CD14-positive monocyte (primary cell): ENCODE measurements at regions of chr2 and their contacts with region 1.

Region 1: GRCh38 chr2:69643602-69644505 is at the start of gene AAK1:
- DNase-seq: peak; percentile 74 to 83 (median 81)
- H3K4me3 ChIP-seq: peak within 1 kb of the TSS; percentile 92 to 96 (median 96)
- H3K4me3 Mint-ChIP-seq: peak within 1 kb of the TSS; percentile 94 to 95
- H3K27ac ChIP-seq: peak within 1 kb of the TSS; percentile 94 to 96
- H3K27ac Mint-ChIP-seq: peak within 1 kb of the TSS; percentile 93 to 99 (median 98)
- H3K4me1 ChIP-seq: peaks cover 51 to 55% of the 10 kb centered on the region in 2 donors
- H3K4me1 Mint-ChIP-seq: peaks cover 69% of the 10 kb centered on the region
- H3K27me3 ChIP-seq: no peaks in the 10 kb centered on the region
- H3K27me3 Mint-ChIP-seq: peaks cover 0 to 2% (median 0%) of the 10 kb centered on the region in 3 donors
- CTCF ChIP-seq: no peak
- polyA plus RNA-seq, gene AAK1: 9.8 to 18.9 (median 10.8) TPM

Region 2: DNA sequence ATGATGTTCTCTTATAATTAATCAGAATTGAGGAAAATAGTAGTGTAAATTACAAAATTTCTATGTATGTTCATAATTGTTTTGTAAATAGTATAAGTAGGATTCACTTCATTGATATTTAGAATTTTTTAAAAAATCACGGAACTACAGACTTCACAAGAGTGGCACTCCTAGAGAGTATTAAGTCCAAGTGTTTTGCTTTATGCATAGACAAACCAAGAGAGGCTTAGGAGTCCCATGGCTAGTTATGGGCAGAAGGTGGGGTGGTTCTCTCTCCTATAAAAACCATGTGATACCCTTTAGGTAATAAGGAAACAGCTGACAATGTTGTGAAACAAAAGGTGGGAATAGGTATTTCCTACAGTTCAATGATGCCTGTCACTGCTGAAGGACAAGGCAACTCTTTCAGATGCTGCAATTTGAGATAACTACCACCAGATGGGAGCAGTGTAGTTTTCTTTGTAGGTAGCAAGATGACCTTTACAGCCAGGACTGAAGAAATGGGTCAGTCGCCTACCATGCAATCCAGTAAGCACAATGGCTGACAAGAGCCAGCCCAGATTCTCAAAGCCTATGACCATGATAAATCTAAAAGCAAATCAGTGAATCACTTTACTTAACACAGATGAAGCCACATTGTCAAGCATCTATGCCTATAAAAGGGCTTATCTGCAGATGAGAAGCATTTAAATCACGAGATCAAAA is 84.3 kb before region 1 on chr2:
- intact Hi-C with region 1: loop called in 1 of 2 experiments (anchors 5 kb)
- DNase-seq: peak; percentile 43 to 67 (median 64)
- H3K4me3 ChIP-seq: no peak overlapping the region
- H3K4me3 Mint-ChIP-seq: no peak overlapping the region
- H3K27ac ChIP-seq: no peak overlapping the region
- H3K27ac Mint-ChIP-seq: no peak overlapping the region
- H3K4me1 ChIP-seq: peaks cover 12 to 16% of the 10 kb centered on the region in 2 donors
- H3K4me1 Mint-ChIP-seq: peaks cover 34% of the 10 kb centered on the region
- H3K27me3 ChIP-seq: no peaks in the 10 kb centered on the region
- H3K27me3 Mint-ChIP-seq: no peaks in the 10 kb centered on the region
- CTCF ChIP-seq: peak; percentile 83

Region 3: DNA sequence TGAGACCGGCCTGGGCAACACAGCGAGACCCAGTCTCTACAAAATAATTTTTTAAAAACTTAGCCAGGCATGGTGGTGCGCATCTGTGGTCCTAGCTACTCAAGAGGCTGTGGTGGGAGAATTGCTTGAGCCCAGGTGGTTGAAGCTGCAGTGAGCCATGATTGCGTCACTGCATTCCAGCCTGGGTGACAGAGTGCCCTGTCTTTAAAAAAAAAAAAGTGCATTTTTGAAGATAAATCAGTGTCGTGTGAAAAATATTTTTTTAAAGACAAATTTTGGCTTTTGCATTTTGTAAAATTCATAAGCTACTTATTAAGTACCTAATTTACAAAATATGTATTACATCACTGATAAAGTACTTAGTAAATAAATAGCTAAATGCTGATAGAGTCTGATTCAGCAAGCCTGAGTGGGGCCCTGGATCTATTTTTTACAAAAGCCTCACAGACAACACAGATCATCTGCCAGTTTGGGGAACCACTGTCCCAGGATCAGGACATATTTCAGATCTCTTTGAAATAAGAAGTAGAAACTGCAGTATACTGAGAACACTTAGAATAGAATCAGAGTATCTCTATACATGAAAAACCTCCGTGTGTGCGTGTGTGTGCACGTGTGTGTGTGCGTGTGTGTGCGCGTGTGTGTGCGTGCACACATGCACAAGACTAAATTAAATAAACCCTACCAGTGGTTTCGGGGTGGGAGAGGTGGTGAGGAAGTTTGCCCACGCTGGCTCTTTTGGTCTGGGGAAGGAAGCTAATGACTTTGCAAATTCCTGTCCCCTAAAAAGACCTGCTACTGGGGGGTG is 61.9 kb before region 1 on chr2:
- intact Hi-C with region 1: loop called in 1 of 2 experiments (anchors 2 kb)
- DNase-seq: peak; percentile 42 to 58 (median 56)
- H3K4me3 ChIP-seq: peak overlapping the region; percentile 8 to 68 (median 25)
- H3K4me3 Mint-ChIP-seq: peak overlapping the region; percentile 75 to 93
- H3K27ac ChIP-seq: peak overlapping the region; percentile 71 to 86
- H3K27ac Mint-ChIP-seq: peak overlapping the region; percentile 88 to 97 (median 93)
- H3K4me1 ChIP-seq: peaks cover 75 to 78% of the 10 kb centered on the region in 2 donors
- H3K4me1 Mint-ChIP-seq: peaks cover 81% of the 10 kb centered on the region
- H3K27me3 ChIP-seq: no peaks in the 10 kb centered on the region
- H3K27me3 Mint-ChIP-seq: peaks cover 0 to 2% (median 0%) of the 10 kb centered on the region in 3 donors
- CTCF ChIP-seq: no peak

Region 4: DNA sequence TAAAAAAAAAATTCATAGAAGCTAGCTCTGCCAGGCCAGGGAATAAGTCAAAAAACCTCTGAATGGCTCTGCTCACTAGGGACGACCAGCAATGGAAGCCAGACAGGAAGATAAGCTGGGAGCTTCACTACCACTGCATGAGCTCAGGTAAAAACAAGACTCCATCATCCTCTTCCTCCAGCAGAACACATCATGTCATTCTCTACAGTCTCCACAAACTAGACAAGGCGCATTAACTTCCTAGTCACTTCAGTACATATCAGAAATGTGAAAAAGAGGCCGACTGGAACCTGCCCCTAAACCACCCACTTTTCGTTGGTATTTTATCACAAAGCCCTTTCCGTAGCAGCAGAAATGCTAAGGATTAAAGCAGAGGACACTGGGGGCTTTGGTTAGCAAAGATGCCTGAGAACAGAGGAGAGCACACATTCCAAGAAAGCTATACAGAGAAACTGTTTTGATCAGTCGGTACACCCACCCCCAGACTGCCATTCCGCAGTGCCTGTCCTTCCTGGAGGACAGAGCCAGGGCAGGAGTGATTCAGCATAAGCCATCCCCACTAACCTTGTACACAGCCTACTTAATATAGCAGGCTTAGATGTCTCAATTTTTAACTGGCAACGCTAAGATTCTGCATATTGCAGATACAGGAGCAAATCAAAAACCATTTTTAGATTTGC is 53.7 kb before region 1 on chr2:
- intact Hi-C with region 1: loop called in 1 of 2 experiments (anchors 10 kb)
- DNase-seq: no peak
- H3K4me3 ChIP-seq: no peak overlapping the region
- H3K4me3 Mint-ChIP-seq: no peak overlapping the region
- H3K27ac ChIP-seq: no peak overlapping the region
- H3K27ac Mint-ChIP-seq: peak overlapping the region in 1 of 7 donors; percentile 43
- H3K4me1 ChIP-seq: peaks cover 15 to 22% of the 10 kb centered on the region in 2 donors
- H3K4me1 Mint-ChIP-seq: peaks cover 44% of the 10 kb centered on the region
- H3K27me3 ChIP-seq: no peaks in the 10 kb centered on the region
- H3K27me3 Mint-ChIP-seq: no peaks in the 10 kb centered on the region
- CTCF ChIP-seq: no peak

Region 5: DNA sequence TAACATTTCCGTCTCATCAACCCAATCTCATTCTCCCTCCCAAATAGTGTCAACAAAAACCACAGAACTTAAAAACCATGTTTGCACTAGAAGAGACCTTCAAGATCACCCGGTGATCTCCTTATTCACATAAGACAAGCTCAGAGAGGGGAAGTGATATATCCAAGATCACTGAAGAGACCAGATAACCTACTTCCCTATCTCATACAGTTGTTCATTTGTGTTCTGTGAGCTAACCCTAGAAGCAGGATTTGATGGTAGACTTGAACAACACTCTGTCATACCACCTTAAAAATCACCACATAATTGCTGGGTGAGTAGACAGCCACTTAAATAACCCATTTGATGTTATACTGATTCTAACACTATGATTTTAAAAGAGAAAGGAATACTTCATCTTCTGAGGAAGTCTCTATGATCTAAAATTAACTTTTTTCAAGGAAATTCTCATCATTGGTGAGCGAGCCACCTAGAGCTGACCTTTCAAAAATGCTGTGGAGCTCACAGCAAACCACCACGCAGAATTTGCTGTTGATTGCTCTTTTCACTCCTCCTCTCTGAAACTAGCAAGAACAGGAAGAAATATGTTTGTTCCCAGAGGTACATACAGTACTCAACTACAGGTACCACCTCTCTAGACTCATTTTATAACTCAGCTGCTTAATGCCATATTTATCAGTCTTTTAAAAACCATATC is 15.4 kb before region 1 on chr2:
- intact Hi-C with region 1: no loop called
- DNase-seq: peak; percentile 48 to 64 (median 62)
- H3K4me3 ChIP-seq: no peak overlapping the region
- H3K4me3 Mint-ChIP-seq: no peak overlapping the region
- H3K27ac ChIP-seq: peak overlapping the region in 1 of 2 donors; percentile 58
- H3K27ac Mint-ChIP-seq: peak overlapping the region in 3 of 7 donors; percentile 20 to 61 (median 27)
- H3K4me1 ChIP-seq: peaks cover 52 to 59% of the 10 kb centered on the region in 2 donors
- H3K4me1 Mint-ChIP-seq: peaks cover 16% of the 10 kb centered on the region
- H3K27me3 ChIP-seq: no peaks in the 10 kb centered on the region
- H3K27me3 Mint-ChIP-seq: no peaks in the 10 kb centered on the region
- CTCF ChIP-seq: no peak